ENCODE measurements at regions of chr18 and their contacts with region 1.

Region 1: GRCh38 chr18:55322178-55322735 is 265.7 kb downstream of the TCF4 start:
- DNase-seq: peak; percentile 88
- ATAC-seq: peak; percentile 87

Region 2: GRCh38 chr18:55136864-55137263 is 185.4 kb before region 1 on chr18:
- intact Hi-C with region 1: no loop called
- DNase-seq: no peak
- ATAC-seq: no peak

Region 3: GRCh38 chr18:55265984-55266383 is 56.3 kb before region 1 on chr18:
- intact Hi-C with region 1: loop called (anchors 10 kb)
- DNase-seq: no peak
- ATAC-seq: peak; percentile 24

Region 4: DNA sequence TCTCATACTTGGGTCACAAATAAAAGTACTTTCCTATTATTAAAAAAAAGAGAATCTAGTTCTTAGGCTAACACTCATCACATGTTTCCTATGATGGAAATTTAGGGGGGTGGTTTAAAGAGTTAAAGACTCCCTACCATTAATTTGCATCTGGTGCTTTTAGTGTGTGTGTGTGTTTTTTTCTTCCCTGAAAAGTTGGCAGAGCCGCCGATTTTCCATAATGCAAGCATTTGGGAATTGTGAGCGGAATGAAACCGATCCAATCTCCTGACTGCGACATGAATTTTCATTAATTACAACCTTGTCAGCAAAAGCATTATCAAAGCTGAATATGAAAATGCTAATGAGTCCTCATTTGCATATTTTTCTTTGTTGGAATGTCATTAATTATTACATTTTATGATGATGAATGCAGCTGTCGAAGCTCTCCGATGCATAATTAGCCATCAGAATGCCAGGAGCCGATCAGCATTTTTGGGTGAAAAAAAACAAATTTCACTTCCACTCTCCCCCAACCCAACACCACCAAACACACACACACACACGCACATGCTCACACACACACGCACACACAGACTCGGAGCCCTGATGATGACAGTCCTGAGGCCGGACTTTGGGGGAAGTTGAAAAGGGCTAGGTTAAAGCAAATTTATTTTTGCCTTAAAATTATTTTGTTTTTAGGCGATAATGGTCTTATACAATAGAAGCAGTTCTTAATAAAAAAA is 100.4 kb after region 1 on chr18:
- intact Hi-C with region 1: no loop called
- DNase-seq: peak; percentile 41
- ATAC-seq: peak; percentile 61

Region 5: GRCh38 chr18:55589625-55590291 is 267.5 kb after region 1 on chr18:
- intact Hi-C with region 1: loop called (anchors 10 kb)
- DNase-seq: peak; percentile 97
- ATAC-seq: peak; percentile 98